GM12878 (cell line): ENCODE measurements at regions of chr11 and their contacts with region 1.

Region 1: DNA sequence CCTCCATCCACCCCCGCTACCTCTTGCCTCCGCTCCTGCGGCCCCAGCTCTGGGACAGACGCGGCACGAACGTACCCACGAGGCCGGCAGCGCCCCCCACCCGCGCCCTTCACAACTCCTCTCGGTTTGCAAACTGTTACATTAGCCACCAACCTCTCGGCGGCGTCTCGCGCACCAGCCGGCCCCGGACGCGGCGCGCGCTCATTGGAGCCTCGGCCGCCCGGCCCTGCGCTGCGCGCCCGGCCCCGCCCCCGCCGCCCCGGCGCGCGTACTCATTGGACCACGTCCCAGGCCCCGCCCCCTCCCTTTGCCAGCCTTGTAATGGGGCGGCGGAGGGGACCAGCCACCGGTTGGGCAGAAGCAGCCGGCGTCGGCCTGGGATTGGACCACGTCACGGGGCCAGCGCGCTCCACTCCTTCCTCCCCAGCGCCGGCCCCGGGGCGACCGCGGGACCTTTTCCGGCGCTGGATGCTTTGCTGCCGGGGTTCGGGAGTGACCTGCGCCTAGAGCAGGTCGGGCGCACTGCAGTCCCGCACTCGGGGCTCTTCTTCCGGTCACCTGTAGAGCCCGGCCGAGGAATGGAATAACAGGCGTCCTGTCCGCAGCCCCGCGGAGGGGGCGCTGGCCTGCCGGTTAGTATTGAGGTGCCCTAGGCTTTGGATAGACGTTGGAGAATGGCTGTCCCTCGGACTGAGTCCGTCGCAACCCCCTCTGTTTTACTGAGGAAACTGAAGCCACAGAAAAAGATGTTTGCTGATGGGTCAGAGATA is at the start of gene HYOU1:
- DNase-seq: peak; percentile 69
- ATAC-seq: peak; percentile 93
- H3K4me3 ChIP-seq: peak within 1 kb of the TSS; percentile 96
- H3K27ac ChIP-seq: peak within 1 kb of the TSS; percentile 79
- H3K4me1 ChIP-seq: peaks cover 19% of the 10 kb centered on the region
- H3K27me3 ChIP-seq: no peaks in the 10 kb centered on the region
- CTCF ChIP-seq: peak; percentile 17 to 26 (median 22); a peak in 2 of 6 replicates
- EP300 ChIP-seq: no peak
- POLR2A ChIP-seq: peak; percentile 88
- RAD21 ChIP-seq: no peak
- polyA plus RNA-seq, gene HYOU1: 15.4 to 46.3 TPM

Region 2: DNA sequence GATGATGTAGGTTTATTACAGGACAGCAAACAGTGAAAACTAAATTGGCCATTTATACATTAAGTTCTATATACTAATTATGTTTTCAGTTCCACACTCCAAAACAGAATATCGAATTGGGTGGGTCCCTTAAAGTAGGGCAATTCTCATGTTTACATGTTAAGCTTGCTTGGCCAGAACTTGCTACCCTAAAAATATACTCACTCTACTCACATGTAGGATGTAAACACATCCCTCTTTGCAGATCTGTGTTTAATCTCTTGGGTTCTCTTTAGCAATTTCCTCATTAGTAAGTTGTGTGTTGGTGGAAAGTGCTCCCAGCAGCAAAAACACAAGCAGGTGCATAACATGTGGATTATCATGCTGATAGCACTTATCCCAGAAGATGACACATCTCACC is 243.6 kb before region 1 on chr11:
- CTCF ChIA-PET with region 1: no interaction called
- POLR2A ChIA-PET with region 1: no interaction called
- RAD21 ChIA-PET with region 1: no interaction called
- SMC1A ChIA-PET with region 1: no interaction called
- in situ Hi-C with region 1: no loop called
- intact Hi-C with region 1: no loop called
- DNase-seq: no peak
- ATAC-seq: no peak
- H3K4me3 ChIP-seq: no peak overlapping the region
- H3K27ac ChIP-seq: no peak overlapping the region
- H3K4me1 ChIP-seq: no peaks in the 10 kb centered on the region
- H3K27me3 ChIP-seq: no peaks in the 10 kb centered on the region
- CTCF ChIP-seq: no peak
- EP300 ChIP-seq: no peak
- POLR2A ChIP-seq: no peak
- RAD21 ChIP-seq: no peak

Region 3: GRCh38 chr11:118939953-118940598 is 117.1 kb before region 1 on chr11:
- CTCF ChIA-PET with region 1: no interaction called
- POLR2A ChIA-PET with region 1: no interaction called
- RAD21 ChIA-PET with region 1: no interaction called
- SMC1A ChIA-PET with region 1: no interaction called
- in situ Hi-C with region 1: no loop called
- intact Hi-C with region 1: no loop called
- DNase-seq: no peak
- ATAC-seq: peak; percentile 88
- H3K4me3 ChIP-seq: no peak overlapping the region
- H3K27ac ChIP-seq: no peak overlapping the region
- H3K4me1 ChIP-seq: peaks cover 14% of the 10 kb centered on the region
- H3K27me3 ChIP-seq: no peaks in the 10 kb centered on the region
- CTCF ChIP-seq: no peak
- EP300 ChIP-seq: no peak
- POLR2A ChIP-seq: 0 out of 2 replicates have a peak, but pooled peaks have one; percentile 22
- RAD21 ChIP-seq: no peak

Region 4: DNA sequence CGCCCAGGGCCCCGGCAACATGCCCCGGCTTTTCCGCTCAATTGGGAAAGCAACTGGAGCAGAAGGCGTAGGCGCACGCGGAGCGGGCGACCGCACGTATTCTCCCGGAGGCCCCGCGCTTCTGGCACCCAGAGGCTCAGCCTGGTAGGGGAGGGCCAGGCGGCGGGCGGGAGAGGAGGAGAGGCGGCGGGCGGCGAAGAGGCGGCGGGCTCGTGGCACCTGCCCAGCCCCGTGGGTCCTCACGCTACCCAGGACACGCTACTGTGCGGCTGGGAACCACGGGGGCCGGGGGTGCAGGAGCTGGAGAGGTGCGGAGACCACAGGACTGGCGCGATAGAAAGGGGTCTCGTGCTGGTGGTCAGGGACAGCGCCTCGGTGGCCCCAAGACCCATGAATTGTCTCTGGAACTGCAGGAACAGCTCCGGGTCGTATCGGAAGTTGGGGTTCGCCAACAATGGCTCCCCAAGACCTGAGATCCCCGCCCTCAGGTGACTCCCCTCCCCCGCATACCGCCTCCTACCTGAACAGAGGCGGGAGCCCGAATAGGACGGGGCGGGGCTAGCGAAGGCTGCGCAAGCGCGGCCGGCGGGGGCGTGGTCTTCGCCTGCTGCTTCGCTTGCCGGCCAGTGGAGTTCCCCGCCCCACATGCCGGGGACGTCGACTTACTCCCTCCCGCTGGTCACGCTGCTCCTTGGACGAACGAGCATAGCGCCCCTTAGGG is 26.7 kb before region 1 on chr11 and contains the start of gene SLC37A4:
- CTCF ChIA-PET with region 1: interaction called, 6 read pairs
- POLR2A ChIA-PET with region 1: interaction called, 14 read pairs
- RAD21 ChIA-PET with region 1: interaction called, 3 read pairs
- SMC1A ChIA-PET with region 1: interaction called, 5 read pairs
- in situ Hi-C with region 1: no loop called
- intact Hi-C with region 1: no loop called
- DNase-seq: peak; percentile 94
- ATAC-seq: peak; percentile 88
- H3K4me3 ChIP-seq: peak within 1 kb of the TSS; percentile 78
- H3K27ac ChIP-seq: peak within 1 kb of the TSS; percentile 80
- H3K4me1 ChIP-seq: peaks cover 14% of the 10 kb centered on the region
- H3K27me3 ChIP-seq: no peaks in the 10 kb centered on the region
- CTCF ChIP-seq: peak; percentile 95 to 96 (median 96); a peak in 4 of 6 replicates
- EP300 ChIP-seq: no peak
- POLR2A ChIP-seq: peak; percentile 69
- RAD21 ChIP-seq: peak; percentile 64
- polyA plus RNA-seq, gene SLC37A4: 11.9 to 12.1 TPM

Region 5: DNA sequence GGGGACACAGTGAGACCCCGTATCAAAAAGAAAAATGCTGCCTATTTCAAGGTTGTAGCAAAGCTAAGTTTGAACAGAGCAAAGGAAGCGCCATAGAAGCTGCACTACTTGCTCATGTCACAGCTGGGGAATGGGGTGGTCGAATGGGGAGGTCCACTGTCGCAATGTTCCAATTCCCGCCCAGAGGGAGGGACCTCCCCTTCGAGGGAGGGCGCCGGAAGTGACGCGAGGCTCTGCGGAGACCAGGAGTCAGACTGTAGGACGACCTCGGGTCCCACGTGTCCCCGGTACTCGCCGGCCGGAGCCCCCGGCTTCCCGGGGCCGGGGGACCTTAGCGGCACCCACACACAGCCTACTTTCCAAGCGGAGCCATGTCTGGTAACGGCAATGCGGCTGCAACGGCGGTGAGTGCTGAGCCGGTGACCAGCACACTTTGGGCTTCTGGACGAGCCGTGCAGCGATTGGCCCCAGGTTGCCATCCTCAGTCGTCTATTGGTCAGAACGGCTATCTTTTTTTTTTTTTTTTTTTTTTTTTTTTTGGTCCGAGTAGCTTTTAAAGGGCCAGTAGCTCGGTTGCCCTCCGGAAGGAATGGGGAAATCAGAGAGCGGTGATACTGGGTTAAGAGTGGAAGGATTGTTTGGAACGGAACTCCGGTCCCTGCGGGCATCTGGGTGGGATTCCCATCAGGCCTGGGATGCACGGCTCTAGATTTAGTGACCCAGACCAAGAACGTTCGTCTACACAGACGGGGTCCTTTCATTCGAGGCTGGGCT is 27.7 kb after region 1 on chr11 and contains the start of gene HMBS:
- CTCF ChIA-PET with region 1: interaction called, 8 read pairs
- POLR2A ChIA-PET with region 1: interaction called, 11 read pairs
- RAD21 ChIA-PET with region 1: interaction called, 9 read pairs
- SMC1A ChIA-PET with region 1: no interaction called
- in situ Hi-C with region 1: no loop called
- intact Hi-C with region 1: no loop called
- DNase-seq: peak; percentile 79
- ATAC-seq: peak; percentile 95
- H3K4me3 ChIP-seq: peak within 1 kb of the TSS; percentile 97
- H3K27ac ChIP-seq: peak within 1 kb of the TSS; percentile 94
- H3K4me1 ChIP-seq: peaks cover 10% of the 10 kb centered on the region
- H3K27me3 ChIP-seq: no peaks in the 10 kb centered on the region
- CTCF ChIP-seq: no peak
- EP300 ChIP-seq: peak in 1 of 2 experiments; percentile 12; a peak in 1 of 4 replicates
- POLR2A ChIP-seq: peak; percentile 89
- RAD21 ChIP-seq: no peak
- polyA plus RNA-seq, gene HMBS: 17.7 to 27.6 TPM

Region 6: GRCh38 chr11:119095066-119095880 is 38.1 kb after region 1 on chr11:
- CTCF ChIA-PET with region 1: interaction called, 4 read pairs
- POLR2A ChIA-PET with region 1: interaction called, 5 read pairs
- RAD21 ChIA-PET with region 1: no interaction called
- SMC1A ChIA-PET with region 1: no interaction called
- in situ Hi-C with region 1: no loop called
- intact Hi-C with region 1: loop called (anchors 2 kb)
- DNase-seq: peak; percentile 99
- ATAC-seq: peak; percentile 89
- H3K4me3 ChIP-seq: peak overlapping the region; percentile 83
- H3K27ac ChIP-seq: peak overlapping the region; percentile 60
- H3K4me1 ChIP-seq: peaks cover 25% of the 10 kb centered on the region
- H3K27me3 ChIP-seq: no peaks in the 10 kb centered on the region
- CTCF ChIP-seq: peak in 1 of 3 experiments; percentile 37; a peak in 1 of 6 replicates
- EP300 ChIP-seq: 0 out of 4 replicates have a peak, but pooled peaks of 1 of the 2 experiments have one; percentile 8
- POLR2A ChIP-seq: peak; percentile 100
- RAD21 ChIP-seq: no peak